ENCODE measurements at regions of chr2 and their contacts with region 1.

Region 1: GRCh38 chr2:219229305-219230058 is at the starts of genes ANKZF1 and ATG9A:
- DNase-seq: peak; percentile 100
- ATAC-seq: peak; percentile 98
- H3K4me3 Mint-ChIP-seq: peak within 1 kb of the TSS; percentile 100
- H3K27ac Mint-ChIP-seq: peak within 1 kb of the TSS; percentile 100
- H3K4me1 Mint-ChIP-seq: peaks cover 61% of the 10 kb centered on the region
- H3K27me3 Mint-ChIP-seq: no peaks in the 10 kb centered on the region
- total RNA-seq, gene ANKZF1: 106 to 114 TPM
- total RNA-seq, gene ATG9A: 51.7 to 53.8 TPM

Region 2: GRCh38 chr2:219142329-219142728 is 87.2 kb before region 1 on chr2:
- CTCF ChIA-PET with region 1: no interaction called
- POLR2A ChIA-PET with region 1: no interaction called
- DNase-seq: no peak
- ATAC-seq: no peak
- H3K4me3 Mint-ChIP-seq: no peak overlapping the region
- H3K27ac Mint-ChIP-seq: no peak overlapping the region
- H3K4me1 Mint-ChIP-seq: no peaks in the 10 kb centered on the region
- H3K27me3 Mint-ChIP-seq: no peaks in the 10 kb centered on the region

Region 3: GRCh38 chr2:219177552-219178376 is 51.7 kb before region 1 on chr2 and contains the start of gene RETREG2:
- CTCF ChIA-PET with region 1: interaction called, 5 read pairs
- POLR2A ChIA-PET with region 1: interaction called, 13 read pairs
- DNase-seq: peak; percentile 82
- ATAC-seq: peak; percentile 55
- H3K4me3 Mint-ChIP-seq: peak within 1 kb of the TSS; percentile 92
- H3K27ac Mint-ChIP-seq: peak within 1 kb of the TSS; percentile 95
- H3K4me1 Mint-ChIP-seq: peaks cover 61% of the 10 kb centered on the region
- H3K27me3 Mint-ChIP-seq: no peaks in the 10 kb centered on the region
- total RNA-seq, gene RETREG2: 104 to 111 TPM

Region 4: GRCh38 chr2:219218732-219219701 is 10.5 kb before region 1 on chr2 and contains the start of gene ABCB6:
- CTCF ChIA-PET with region 1: interaction called, 10 read pairs
- POLR2A ChIA-PET with region 1: interaction called, 8 read pairs
- DNase-seq: peak; percentile 87
- ATAC-seq: peak; percentile 77
- H3K4me3 Mint-ChIP-seq: peak within 1 kb of the TSS; percentile 77
- H3K27ac Mint-ChIP-seq: peak within 1 kb of the TSS; percentile 75
- H3K4me1 Mint-ChIP-seq: peaks cover 26% of the 10 kb centered on the region
- H3K27me3 Mint-ChIP-seq: no peaks in the 10 kb centered on the region
- total RNA-seq, gene ABCB6: 11.6 to 11.9 TPM

Region 5: GRCh38 chr2:219245148-219245898 is 15.8 kb after region 1 on chr2 and contains the starts of genes GLB1L and STK16:
- CTCF ChIA-PET with region 1: interaction called, 8 read pairs
- POLR2A ChIA-PET with region 1: interaction called, 56 read pairs
- DNase-seq: peak; percentile 92
- ATAC-seq: peak; percentile 74
- H3K4me3 Mint-ChIP-seq: peak within 1 kb of the TSS; percentile 99
- H3K27ac Mint-ChIP-seq: peak within 1 kb of the TSS; percentile 100
- H3K4me1 Mint-ChIP-seq: peaks cover 66% of the 10 kb centered on the region
- H3K27me3 Mint-ChIP-seq: no peaks in the 10 kb centered on the region
- total RNA-seq, gene GLB1L: 3.4 to 4.0 TPM
- total RNA-seq, gene STK16: 31.2 to 31.5 TPM

Region 6: DNA sequence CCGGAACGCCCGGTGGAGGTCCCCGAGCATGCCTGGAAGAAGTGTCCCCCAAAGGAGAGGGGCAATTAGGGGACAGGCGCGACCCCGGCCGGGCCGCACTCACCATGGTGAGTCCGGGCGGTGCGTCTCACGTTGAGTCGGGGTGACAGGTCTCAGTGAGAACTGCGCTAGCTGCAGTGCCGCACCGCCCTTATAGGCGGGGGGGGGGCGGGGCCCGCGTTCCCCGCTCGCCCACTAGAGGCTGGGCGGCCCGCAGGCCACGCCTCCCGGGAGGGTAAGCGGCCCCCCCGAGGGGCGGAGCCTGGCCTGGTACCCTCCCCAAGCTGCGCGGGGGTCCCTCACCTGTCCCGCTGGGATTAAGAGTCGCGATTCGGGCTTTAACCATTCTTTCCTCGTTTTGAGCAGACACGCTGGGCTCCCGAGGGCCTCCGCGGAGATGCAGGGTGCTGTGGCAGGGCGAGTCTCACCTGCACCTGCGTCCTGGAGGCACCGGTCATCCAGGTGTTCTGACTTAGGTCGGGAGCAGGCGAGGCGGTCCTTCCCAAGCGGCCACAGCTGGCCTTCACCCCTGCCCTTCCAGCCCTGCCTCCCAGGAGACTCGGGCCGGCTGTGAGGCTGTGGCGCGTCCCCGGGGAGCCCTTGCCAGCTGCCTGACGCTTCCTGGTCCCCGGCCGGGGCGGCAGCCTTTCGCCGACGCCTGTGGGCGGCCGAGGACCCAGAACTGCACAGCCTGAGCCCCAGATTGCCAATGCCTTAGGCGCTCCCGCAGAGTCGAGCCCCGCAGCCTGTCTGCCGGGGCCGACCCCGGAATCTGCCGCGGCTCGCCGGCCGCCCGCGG is 24.5 kb after region 1 on chr2 and contains the start of gene TUBA4A:
- CTCF ChIA-PET with region 1: interaction called, 10 read pairs
- POLR2A ChIA-PET with region 1: interaction called, 77 read pairs
- DNase-seq: peak; percentile 91
- ATAC-seq: peak; percentile 80
- H3K4me3 Mint-ChIP-seq: peak within 1 kb of the TSS; percentile 99
- H3K27ac Mint-ChIP-seq: peak within 1 kb of the TSS; percentile 100
- H3K4me1 Mint-ChIP-seq: peaks cover 44% of the 10 kb centered on the region
- H3K27me3 Mint-ChIP-seq: no peaks in the 10 kb centered on the region
- total RNA-seq, gene TUBA4A: 286 to 292 TPM

Measured in activated CD8-positive, alpha-beta T cell treated with anti-CD3 and anti-CD28 coated beads, Interleukin-2, amount 10 ng/mL, durations not matched to agents 7 days and 5 days (primary cell).